ENCODE measurements at regions of chr10 and their contacts with region 1.

Region 1: DNA sequence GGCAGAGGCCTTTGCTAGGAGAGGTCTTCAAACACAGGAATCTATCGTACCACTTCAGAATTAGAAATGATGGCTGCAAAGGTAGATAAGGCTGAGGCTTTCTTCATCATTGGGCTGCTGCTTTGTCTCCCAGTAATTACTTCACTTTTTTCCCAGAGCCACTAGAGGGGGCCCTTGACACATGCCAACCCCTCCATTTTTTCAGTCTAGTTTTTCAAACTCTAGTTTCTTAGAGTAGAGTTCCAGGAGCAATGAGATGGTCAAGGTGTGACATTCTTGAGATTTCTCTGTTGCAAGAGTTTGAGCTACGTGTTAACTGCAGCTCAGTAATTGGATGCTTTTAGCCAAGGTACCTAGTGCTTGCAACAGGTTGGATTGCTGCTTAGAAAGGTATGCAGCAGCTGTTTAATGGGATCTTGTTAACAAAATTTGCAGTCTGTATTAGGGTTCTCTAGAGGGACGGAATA is 33.8 kb upstream of the RBM20 start:
- DNase-seq: peak; percentile 49
- ATAC-seq: peak; percentile 80
- H3K4me3 ChIP-seq: no peak overlapping the region
- H3K27ac ChIP-seq: no peak overlapping the region
- H3K4me1 ChIP-seq: peaks cover 0 to 9% of the 10 kb centered on the region in 2 experiments; a peak in 1 of 4 replicates
- H3K27me3 ChIP-seq: 0 out of 2 replicates have a peak, but pooled peaks cover 4% of the 10 kb centered on the region
- CTCF ChIP-seq: peak; percentile 94 to 99 (median 95)
- POLR2A ChIP-seq: no peak
- RAD21 ChIP-seq: peak; percentile 99

Region 2: DNA sequence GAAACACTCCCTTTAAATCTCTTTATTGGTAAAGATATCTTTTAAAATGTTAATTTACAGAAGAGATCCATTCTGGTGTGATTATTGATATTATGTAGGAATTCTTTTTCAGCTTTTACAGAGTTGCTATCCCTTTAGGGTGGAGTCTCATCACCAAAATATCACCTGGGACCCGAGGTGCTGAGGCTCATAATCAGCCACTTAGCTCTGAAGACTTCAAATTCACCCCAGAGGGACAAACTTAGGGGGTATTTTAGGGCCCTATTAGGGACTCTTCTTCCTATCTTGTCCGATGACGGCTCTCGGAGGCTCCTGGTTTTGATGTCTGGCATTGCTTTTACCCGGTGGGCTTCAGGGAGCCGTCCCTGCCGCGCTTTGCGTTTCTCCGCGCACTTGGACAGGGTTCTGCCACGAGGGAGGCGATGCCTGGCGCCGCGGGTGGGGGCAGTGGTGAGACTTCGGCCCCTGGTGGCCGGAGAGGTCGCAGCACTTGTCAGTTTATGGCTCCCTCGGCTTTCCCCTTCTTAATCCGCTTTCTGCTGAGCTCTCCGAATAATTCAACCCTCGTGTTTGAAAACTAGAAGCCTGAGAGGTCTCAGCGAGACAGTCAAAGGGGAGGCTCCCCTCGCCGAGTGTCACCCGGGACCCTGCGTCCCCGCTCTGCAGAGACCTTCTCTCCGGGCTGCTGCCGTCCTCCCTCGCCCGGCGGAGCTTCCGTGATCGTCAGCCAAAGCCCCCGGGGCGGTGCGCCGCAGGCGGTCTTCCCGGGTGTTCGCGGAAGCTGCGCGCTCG is 61.6 kb after region 1 on chr10:
- CTCF ChIA-PET with region 1: interaction called, 5 read pairs
- POLR2A ChIA-PET with region 1: no interaction called
- RAD21 ChIA-PET with region 1: interaction called in 1 of 2 experiments, 3 read pairs
- intact Hi-C with region 1: loop called (anchors 2 kb)
- DNase-seq: peak; percentile 78
- ATAC-seq: peak; percentile 97
- H3K4me3 ChIP-seq: peak overlapping the region; percentile 66 to 68
- H3K27ac ChIP-seq: peak overlapping the region; percentile 32
- H3K4me1 ChIP-seq: peaks cover 3 to 18% of the 10 kb centered on the region in 2 experiments; a peak in 2 of 4 replicates
- H3K27me3 ChIP-seq: no peaks in the 10 kb centered on the region
- CTCF ChIP-seq: peak; percentile 89 to 97 (median 90)
- POLR2A ChIP-seq: peak; percentile 32
- RAD21 ChIP-seq: peak; percentile 85

Region 3: GRCh38 chr10:110739811-110740271 is 129.5 kb after region 1 on chr10:
- CTCF ChIA-PET with region 1: no interaction called
- POLR2A ChIA-PET with region 1: no interaction called
- RAD21 ChIA-PET with region 1: no interaction called
- intact Hi-C with region 1: loop called (anchors 5 kb)
- DNase-seq: peak; percentile 15
- ATAC-seq: peak; percentile 92
- H3K4me3 ChIP-seq: no peak overlapping the region
- H3K27ac ChIP-seq: no peak overlapping the region
- H3K4me1 ChIP-seq: peaks cover 6 to 14% of the 10 kb centered on the region in 2 experiments; a peak in 3 of 4 replicates
- H3K27me3 ChIP-seq: peaks cover 4% of the 10 kb centered on the region; the same call in 1 of the 2 replicates
- CTCF ChIP-seq: no peak
- POLR2A ChIP-seq: no peak
- RAD21 ChIP-seq: no peak

Region 4: DNA sequence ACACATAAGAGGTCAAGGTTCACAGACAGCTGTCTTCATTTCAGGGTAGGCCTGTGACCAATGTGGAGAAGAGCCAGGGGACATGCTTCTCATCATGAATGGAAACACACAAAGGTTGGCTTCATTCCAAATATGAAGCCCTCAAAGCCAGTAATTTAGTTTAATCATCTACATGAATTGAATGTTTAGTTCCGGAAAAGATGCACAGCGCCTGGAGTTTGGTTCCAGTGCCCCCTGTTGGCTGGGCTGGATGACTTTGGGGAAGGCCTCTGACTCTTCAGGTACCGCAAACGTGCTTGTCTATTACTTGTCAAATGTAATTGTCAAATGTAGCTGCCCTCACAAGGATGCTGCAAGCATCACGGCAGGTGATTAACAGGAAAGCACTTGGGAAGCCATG is 597.2 kb after region 1 on chr10:
- CTCF ChIA-PET with region 1: interaction called, 4 read pairs
- POLR2A ChIA-PET with region 1: no interaction called
- RAD21 ChIA-PET with region 1: no interaction called
- intact Hi-C with region 1: loop called (anchors 10 kb)
- DNase-seq: no peak
- ATAC-seq: peak; percentile 58
- H3K4me3 ChIP-seq: no peak overlapping the region
- H3K27ac ChIP-seq: no peak overlapping the region
- H3K4me1 ChIP-seq: no peaks in the 10 kb centered on the region
- H3K27me3 ChIP-seq: peaks cover 33% of the 10 kb centered on the region
- CTCF ChIP-seq: peak; percentile 44 to 58 (median 51); a peak in 5 of 6 replicates
- POLR2A ChIP-seq: no peak
- RAD21 ChIP-seq: peak; percentile 71

Region 5: GRCh38 chr10:111598436-111599059 is 988.2 kb after region 1 on chr10:
- CTCF ChIA-PET with region 1: no interaction called
- POLR2A ChIA-PET with region 1: no interaction called
- RAD21 ChIA-PET with region 1: no interaction called
- intact Hi-C with region 1: loop called (anchors 10 kb)
- DNase-seq: peak; percentile 60
- ATAC-seq: peak; percentile 97
- H3K4me3 ChIP-seq: no peak overlapping the region
- H3K27ac ChIP-seq: no peak overlapping the region
- H3K4me1 ChIP-seq: no peaks in the 10 kb centered on the region
- H3K27me3 ChIP-seq: peaks cover 13% of the 10 kb centered on the region; the same call in 1 of the 2 replicates
- CTCF ChIP-seq: peak; percentile 65 to 98 (median 95); a peak in 5 of 6 replicates
- POLR2A ChIP-seq: no peak
- RAD21 ChIP-seq: peak; percentile 67

Measured in HCT116 (cell line).